ENCODE measurements at regions of chr10 and their contacts with region 1.

Region 1: GRCh38 chr10:33134011-33134751 is 176.2 kb upstream of the ITGB1 start:
- DNase-seq: peak; percentile 78 to 97
- ATAC-seq: peak; percentile 83 to 92
- H3K4me3 ChIP-seq: no peak overlapping the region
- H3K27ac ChIP-seq: peak overlapping the region; percentile 84 to 95
- H3K4me1 ChIP-seq: peaks cover 74% of the 10 kb centered on the region
- CTCF ChIP-seq: no peak
- EP300 ChIP-seq: peak; percentile 97 to 98; a peak in 4 of 5 replicates
- POLR2A ChIP-seq: no peak
- RAD21 ChIP-seq: peak; percentile 27 to 61; a peak in 4 of 5 replicates

Region 2: DNA sequence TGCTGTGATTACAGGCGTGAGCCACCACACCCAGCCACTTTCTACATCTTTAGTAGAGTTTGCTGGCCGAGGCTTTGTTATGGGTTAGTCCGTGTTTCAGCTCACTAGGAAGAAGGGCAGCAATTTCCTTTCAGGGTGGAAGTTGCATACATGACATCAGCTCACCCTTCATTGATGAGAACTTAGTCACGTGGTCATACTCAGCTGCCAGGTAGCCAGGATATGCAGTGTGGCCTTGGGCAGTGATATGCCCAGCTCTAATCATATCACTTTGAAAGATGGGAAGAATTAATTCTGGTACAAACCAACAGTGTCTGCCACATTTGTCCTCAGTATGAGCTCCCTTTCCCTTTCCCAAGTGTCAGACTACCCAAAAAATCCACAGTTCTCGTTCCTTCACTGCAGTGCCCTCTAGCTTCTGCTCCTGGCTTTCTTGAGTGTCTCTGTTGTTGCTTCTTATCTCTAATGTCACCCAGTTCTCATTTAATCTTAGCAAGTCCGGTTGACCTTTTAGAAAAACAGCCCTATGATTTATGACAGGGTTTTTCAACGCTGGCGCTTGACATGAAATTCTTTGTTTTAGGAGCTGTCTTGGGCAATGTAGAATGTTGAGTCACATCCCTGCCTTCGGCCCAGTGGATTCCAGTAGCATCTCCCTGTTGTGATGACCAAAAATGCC is 67.5 kb before region 1 on chr10:
- CTCF ChIA-PET with region 1: interaction called, 12 read pairs
- POLR2A ChIA-PET with region 1: interaction called, 4 read pairs
- DNase-seq: peak; percentile 29 to 88
- ATAC-seq: peak; percentile 87 to 90
- H3K4me3 ChIP-seq: no peak overlapping the region
- H3K27ac ChIP-seq: peak overlapping the region; percentile 69 to 84
- H3K4me1 ChIP-seq: peaks cover 33% of the 10 kb centered on the region
- CTCF ChIP-seq: peak; percentile 61
- EP300 ChIP-seq: peak; percentile 63 to 90; a peak in 4 of 5 replicates
- POLR2A ChIP-seq: no peak
- RAD21 ChIP-seq: peak; percentile 64 to 65

Region 3: GRCh38 chr10:33115738-33116719 is 18.2 kb before region 1 on chr10:
- CTCF ChIA-PET with region 1: interaction called, 16 read pairs
- POLR2A ChIA-PET with region 1: no interaction called
- DNase-seq: peak in 1 of 2 experiments; percentile 67
- ATAC-seq: peak; percentile 67 to 82; a peak in 5 of 6 replicates
- H3K4me3 ChIP-seq: no peak overlapping the region
- H3K27ac ChIP-seq: peak overlapping the region; percentile 68 to 84
- H3K4me1 ChIP-seq: peaks cover 38% of the 10 kb centered on the region
- CTCF ChIP-seq: peak; percentile 64
- EP300 ChIP-seq: no peak
- POLR2A ChIP-seq: no peak
- RAD21 ChIP-seq: peak; percentile 58 to 69

Region 4: DNA sequence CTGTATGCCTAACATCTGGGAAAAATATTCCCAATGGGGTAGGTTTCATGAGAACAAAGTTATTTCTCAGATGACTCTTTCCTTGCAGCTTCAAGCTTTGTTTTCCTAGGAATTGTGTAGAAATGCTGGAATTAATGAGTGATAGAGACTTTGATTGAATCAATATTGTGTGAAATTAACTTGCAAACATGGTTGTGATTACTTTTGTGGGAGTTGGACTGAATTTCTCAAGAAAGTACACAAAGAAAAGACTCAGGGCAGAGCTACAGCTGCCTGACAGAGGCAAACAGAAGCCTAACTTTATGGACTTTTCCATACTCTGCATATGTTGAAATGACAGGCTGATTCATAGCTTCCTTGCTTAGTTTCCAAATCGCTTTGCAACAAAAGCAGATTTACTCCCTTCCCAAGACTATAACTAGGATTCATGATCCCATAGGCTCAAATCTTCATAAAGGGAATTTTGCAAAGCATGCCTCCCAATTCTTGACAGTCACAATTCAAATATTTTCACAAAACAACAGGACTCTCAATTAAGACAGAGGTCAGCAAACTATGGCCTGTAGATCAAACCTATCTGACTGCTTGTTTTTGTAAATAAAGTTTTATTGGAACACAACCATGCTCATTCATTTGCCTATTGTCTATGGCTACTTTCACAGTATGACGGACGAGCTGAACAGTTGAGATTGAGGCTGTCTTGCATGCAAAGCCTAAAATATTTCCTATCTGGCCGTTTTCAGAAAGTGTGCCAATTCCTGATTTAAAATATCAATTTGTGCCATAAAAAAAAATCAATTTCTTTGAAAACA is 172.7 kb after region 1 on chr10:
- CTCF ChIA-PET with region 1: no interaction called
- POLR2A ChIA-PET with region 1: no interaction called
- DNase-seq: peak in 1 of 2 experiments; percentile 76
- ATAC-seq: peak in 1 of 2 experiments; percentile 78; a peak in 3 of 6 replicates
- H3K4me3 ChIP-seq: no peak overlapping the region
- H3K27ac ChIP-seq: peak overlapping the region; percentile 52 to 59
- H3K4me1 ChIP-seq: peaks cover 67% of the 10 kb centered on the region
- CTCF ChIP-seq: no peak
- EP300 ChIP-seq: peak; percentile 23 to 49; a peak in 2 of 5 replicates
- POLR2A ChIP-seq: no peak
- RAD21 ChIP-seq: no peak